Activated CD4-positive, alpha-beta memory T cell treated with anti-CD3 and anti-CD28 coated beads for 36 hours (primary cell): ENCODE measurements at regions of chr11 and their contacts with region 1.

Region 1: GRCh38 chr11:65432686-65433582 is 10.3 kb downstream of the NEAT1 start:
- DNase-seq: peak; percentile 5
- H3K4me3 Mint-ChIP-seq: peak overlapping the region; percentile 21
- H3K27ac Mint-ChIP-seq: peak overlapping the region; percentile 78
- H3K4me1 Mint-ChIP-seq: peaks cover 88% of the 10 kb centered on the region
- H3K27me3 Mint-ChIP-seq: no peaks in the 10 kb centered on the region

Region 2: DNA sequence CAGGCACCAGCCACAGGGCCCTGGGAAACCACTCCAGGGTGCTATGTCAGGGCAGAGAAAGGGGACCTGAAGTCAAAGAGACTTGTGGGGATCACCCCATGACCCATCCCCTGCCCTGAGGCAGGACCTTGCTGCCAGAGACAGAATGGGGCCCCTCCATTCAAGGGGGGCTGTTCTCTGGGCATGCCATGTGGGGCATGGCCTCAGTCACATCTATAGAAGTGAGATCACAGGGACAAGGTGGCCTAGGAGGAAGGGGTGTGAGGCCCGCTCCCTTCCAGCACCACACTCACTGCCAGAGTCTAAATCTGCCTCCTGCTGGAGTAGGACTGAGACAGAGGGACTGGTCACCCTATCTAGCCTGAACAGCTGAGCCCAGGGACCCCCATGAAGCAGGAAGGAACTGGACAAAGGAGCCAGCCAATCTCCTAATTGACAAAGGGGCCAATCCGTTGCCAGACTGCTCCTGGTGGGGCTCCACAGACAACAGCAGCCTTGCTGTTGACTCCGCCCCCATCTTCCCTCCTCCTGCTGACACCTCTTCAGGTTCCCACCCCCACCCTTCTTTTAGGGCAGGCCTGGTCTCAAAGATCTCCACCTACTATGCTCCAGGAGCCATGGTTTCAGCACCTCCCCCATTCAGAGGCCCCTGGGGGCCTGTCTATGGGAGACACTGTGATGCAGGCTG is 15.6 kb after region 1 on chr11:
- CTCF ChIA-PET with region 1: no interaction called
- POLR2A ChIA-PET with region 1: interaction called, 13 read pairs
- intact Hi-C with region 1: no loop called
- DNase-seq: peak; percentile 28
- H3K4me3 Mint-ChIP-seq: no peak overlapping the region
- H3K27ac Mint-ChIP-seq: no peak overlapping the region
- H3K4me1 Mint-ChIP-seq: peaks cover 16% of the 10 kb centered on the region
- H3K27me3 Mint-ChIP-seq: no peaks in the 10 kb centered on the region